Activated naive CD4-positive, alpha-beta T cell treated with anti-CD3 and anti-CD28 coated beads for 36 hours (primary cell): ENCODE measurements at regions of chr6 and their contacts with region 1.

Region 1: DNA sequence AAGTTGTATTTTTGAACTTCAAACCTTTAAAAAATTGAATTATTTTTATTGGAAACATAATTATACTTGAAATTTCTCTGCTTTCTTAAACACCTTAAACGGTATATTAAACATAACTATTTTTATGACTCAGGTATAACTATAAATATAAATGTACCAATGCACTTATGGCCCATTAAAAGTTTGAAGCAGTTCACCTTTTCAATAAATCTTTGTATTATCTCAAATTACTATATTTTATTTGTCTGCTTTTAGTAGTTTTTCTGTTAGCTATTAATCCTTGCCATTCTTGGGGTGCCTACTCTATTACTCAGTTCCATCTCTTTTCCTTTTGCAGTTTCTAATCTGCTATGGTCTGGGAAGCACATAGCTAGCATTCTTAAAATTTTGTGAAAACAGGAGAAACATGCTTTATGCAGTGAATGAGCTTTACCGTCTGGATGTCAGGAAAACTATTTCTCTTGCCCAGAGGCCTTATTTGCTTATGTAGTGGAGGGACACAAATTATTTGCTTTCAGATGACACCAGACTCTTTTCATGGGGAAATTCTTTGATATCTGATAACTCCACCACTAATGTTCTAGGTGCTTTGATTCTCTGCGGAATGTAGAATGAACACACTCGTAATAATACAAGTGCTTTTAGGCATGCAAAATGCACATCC is 378.9 kb upstream of the CITED2 start:
- DNase-seq: no peak
- H3K4me3 Mint-ChIP-seq: no peak overlapping the region
- H3K27ac Mint-ChIP-seq: no peak overlapping the region
- H3K4me1 Mint-ChIP-seq: no peaks in the 10 kb centered on the region
- H3K27me3 Mint-ChIP-seq: no peaks in the 10 kb centered on the region

Region 2: GRCh38 chr6:139623372-139623771 is 130.0 kb before region 1 on chr6:
- CTCF ChIA-PET with region 1: no interaction called
- intact Hi-C with region 1: no loop called
- DNase-seq: no peak
- H3K4me3 Mint-ChIP-seq: no peak overlapping the region
- H3K27ac Mint-ChIP-seq: no peak overlapping the region
- H3K4me1 Mint-ChIP-seq: no peaks in the 10 kb centered on the region
- H3K27me3 Mint-ChIP-seq: peaks cover 31% of the 10 kb centered on the region

Region 3: DNA sequence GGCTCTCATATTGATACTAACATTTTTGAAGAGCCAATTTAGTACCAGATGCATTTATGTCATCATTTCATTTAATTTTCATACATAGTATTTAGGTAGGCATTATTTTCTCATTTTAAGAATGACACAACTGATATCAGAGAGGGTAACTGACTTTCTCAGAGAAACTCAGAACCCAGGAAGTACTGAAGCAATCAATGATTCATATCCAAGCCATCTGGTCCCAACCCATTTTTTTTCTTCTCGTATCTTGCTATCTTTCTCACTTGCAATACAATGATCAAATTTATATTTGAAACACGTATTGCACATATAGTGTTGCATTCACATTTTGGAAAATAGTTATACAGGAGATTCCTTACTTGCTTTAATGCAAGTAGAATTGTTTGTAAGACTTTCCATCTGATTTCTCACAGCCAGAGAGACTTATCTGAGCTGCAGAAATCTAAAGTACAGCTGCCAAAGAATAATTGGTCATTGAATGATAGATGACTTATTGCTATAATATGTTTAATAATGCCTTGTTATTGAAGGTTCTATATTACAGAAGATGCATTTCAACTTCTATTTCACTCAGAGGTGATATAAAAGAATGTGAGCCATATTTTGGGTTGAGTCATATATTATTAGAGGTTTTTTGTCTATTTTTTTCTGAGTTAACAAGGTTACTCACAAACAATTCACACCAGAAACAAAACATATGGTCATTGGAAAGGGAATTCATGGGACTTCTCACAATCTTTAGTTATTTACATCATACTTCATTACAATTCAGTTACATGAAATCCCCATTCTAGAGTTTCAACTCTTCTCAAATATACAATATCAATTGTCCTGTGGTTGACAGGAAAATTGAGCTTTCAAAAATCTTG is 41.4 kb before region 1 on chr6:
- CTCF ChIA-PET with region 1: no interaction called
- intact Hi-C with region 1: no loop called
- DNase-seq: no peak
- H3K4me3 Mint-ChIP-seq: no peak overlapping the region
- H3K27ac Mint-ChIP-seq: no peak overlapping the region
- H3K4me1 Mint-ChIP-seq: no peaks in the 10 kb centered on the region
- H3K27me3 Mint-ChIP-seq: peaks cover 8% of the 10 kb centered on the region

Region 4: GRCh38 chr6:139764498-139764986 is 11.2 kb after region 1 on chr6:
- CTCF ChIA-PET with region 1: no interaction called
- intact Hi-C with region 1: loop called (anchors 1 kb)
- DNase-seq: no peak
- H3K4me3 Mint-ChIP-seq: no peak overlapping the region
- H3K27ac Mint-ChIP-seq: no peak overlapping the region
- H3K4me1 Mint-ChIP-seq: peaks cover 9% of the 10 kb centered on the region
- H3K27me3 Mint-ChIP-seq: no peaks in the 10 kb centered on the region